Activated CD8-positive, alpha-beta T cell treated with anti-CD3 and anti-CD28 coated beads, Interleukin-2, amount 10 ng/mL, durations not matched to agents 7 days and 5 days (primary cell): ENCODE measurements at regions of chr1 and their contacts with region 1.

Region 1: GRCh38 chr1:229479660-229480399 is 28.3 kb downstream of the NUP133 start:
- DNase-seq: no peak
- ATAC-seq: no peak
- H3K4me3 Mint-ChIP-seq: no peak overlapping the region
- H3K27ac Mint-ChIP-seq: peak overlapping the region; percentile 4
- H3K4me1 Mint-ChIP-seq: peaks cover 9% of the 10 kb centered on the region
- H3K27me3 Mint-ChIP-seq: no peaks in the 10 kb centered on the region

Region 2: GRCh38 chr1:229410692-229411443 is 69.0 kb before region 1 on chr1:
- CTCF ChIA-PET with region 1: interaction called, 10 read pairs
- POLR2A ChIA-PET with region 1: no interaction called
- DNase-seq: peak; percentile 42
- ATAC-seq: peak; percentile 65
- H3K4me3 Mint-ChIP-seq: peak overlapping the region; percentile 47
- H3K27ac Mint-ChIP-seq: peak overlapping the region; percentile 62
- H3K4me1 Mint-ChIP-seq: peaks cover 29% of the 10 kb centered on the region
- H3K27me3 Mint-ChIP-seq: peaks cover 54% of the 10 kb centered on the region

Region 3: GRCh38 chr1:229440851-229441537 is 38.8 kb before region 1 on chr1:
- CTCF ChIA-PET with region 1: interaction called, 16 read pairs
- POLR2A ChIA-PET with region 1: no interaction called
- DNase-seq: peak; percentile 56
- ATAC-seq: peak; percentile 94
- H3K4me3 Mint-ChIP-seq: peak overlapping the region; percentile 10
- H3K27ac Mint-ChIP-seq: peak overlapping the region; percentile 73
- H3K4me1 Mint-ChIP-seq: peaks cover 30% of the 10 kb centered on the region
- H3K27me3 Mint-ChIP-seq: peaks cover 9% of the 10 kb centered on the region

Region 4: DNA sequence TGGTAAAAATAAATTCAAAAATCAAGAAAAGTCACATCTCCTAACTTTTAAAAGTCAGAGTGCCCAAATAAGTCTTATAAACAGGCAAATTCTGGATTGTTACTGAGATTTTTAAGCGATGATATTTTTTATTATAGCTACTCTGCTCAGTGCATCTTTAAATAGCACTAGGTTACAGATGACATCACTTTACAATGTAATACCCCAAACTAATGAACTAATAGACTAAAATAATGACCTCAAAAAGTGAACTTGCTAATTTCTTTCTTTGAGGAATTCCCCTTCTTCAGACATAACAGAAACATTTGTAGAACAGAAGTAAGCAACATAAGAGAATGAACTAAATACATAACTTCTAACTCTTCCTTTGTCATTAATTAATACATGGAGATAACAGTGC is 12.9 kb before region 1 on chr1:
- CTCF ChIA-PET with region 1: interaction called, 16 read pairs
- POLR2A ChIA-PET with region 1: no interaction called
- DNase-seq: no peak
- ATAC-seq: no peak
- H3K4me3 Mint-ChIP-seq: no peak overlapping the region
- H3K27ac Mint-ChIP-seq: no peak overlapping the region
- H3K4me1 Mint-ChIP-seq: no peaks in the 10 kb centered on the region
- H3K27me3 Mint-ChIP-seq: no peaks in the 10 kb centered on the region

Region 5: GRCh38 chr1:229495782-229496181 is 16.0 kb after region 1 on chr1:
- CTCF ChIA-PET with region 1: interaction called, 11 read pairs
- POLR2A ChIA-PET with region 1: interaction called, 3 read pairs
- DNase-seq: no peak
- ATAC-seq: no peak
- H3K4me3 Mint-ChIP-seq: no peak overlapping the region
- H3K27ac Mint-ChIP-seq: no peak overlapping the region
- H3K4me1 Mint-ChIP-seq: no peaks in the 10 kb centered on the region
- H3K27me3 Mint-ChIP-seq: no peaks in the 10 kb centered on the region

Region 6: GRCh38 chr1:229507951-229508822 is 28.4 kb after region 1 on chr1 and contains the start of gene NUP133:
- CTCF ChIA-PET with region 1: interaction called, 11 read pairs
- POLR2A ChIA-PET with region 1: interaction called, 6 read pairs
- DNase-seq: peak; percentile 99
- ATAC-seq: peak; percentile 95
- H3K4me3 Mint-ChIP-seq: peak within 1 kb of the TSS; percentile 87
- H3K27ac Mint-ChIP-seq: peak within 1 kb of the TSS; percentile 96
- H3K4me1 Mint-ChIP-seq: peaks cover 36% of the 10 kb centered on the region
- H3K27me3 Mint-ChIP-seq: peaks cover 2% of the 10 kb centered on the region
- total RNA-seq, gene NUP133: 46.8 to 49.7 TPM

Region 7: DNA sequence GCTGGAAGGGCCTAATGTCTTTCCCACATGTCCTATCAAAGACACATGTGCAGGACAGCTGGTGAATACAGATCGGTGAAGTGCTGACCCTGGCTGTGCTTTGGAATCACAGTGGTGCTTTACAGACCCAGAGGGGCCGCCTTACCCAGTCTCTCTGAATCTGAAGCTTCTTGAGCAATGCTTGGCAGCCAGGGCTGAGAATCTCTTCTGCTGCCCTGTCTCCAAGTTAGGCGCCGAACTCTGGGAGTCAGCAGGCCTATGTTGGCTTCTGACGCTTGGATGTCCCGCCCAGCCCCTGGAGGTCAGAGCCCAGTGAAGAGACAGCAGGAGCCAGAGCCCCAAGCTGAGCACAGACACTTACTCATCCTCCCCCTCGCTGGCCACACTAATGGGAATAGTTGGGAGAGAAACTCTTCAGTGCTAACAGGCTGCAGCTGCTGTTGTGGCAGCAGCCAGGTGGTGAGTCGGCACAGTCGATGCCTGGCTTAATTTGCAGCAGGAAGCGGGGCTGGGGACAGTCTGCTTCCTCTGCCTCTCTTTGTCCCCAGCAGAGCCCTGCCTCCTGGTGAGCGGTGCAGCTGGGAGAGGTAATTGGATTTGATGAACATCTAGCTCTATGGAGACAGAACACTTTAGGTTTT is 214.3 kb after region 1 on chr1:
- CTCF ChIA-PET with region 1: no interaction called
- POLR2A ChIA-PET with region 1: no interaction called
- DNase-seq: no peak
- ATAC-seq: no peak
- H3K4me3 Mint-ChIP-seq: no peak overlapping the region
- H3K27ac Mint-ChIP-seq: no peak overlapping the region
- H3K4me1 Mint-ChIP-seq: peaks cover 24% of the 10 kb centered on the region
- H3K27me3 Mint-ChIP-seq: peaks cover 14% of the 10 kb centered on the region

Region 8: GRCh38 chr1:229714964-229715603 is 235.3 kb after region 1 on chr1:
- CTCF ChIA-PET with region 1: no interaction called
- POLR2A ChIA-PET with region 1: no interaction called
- DNase-seq: peak; percentile 40
- ATAC-seq: no peak
- H3K4me3 Mint-ChIP-seq: no peak overlapping the region
- H3K27ac Mint-ChIP-seq: no peak overlapping the region
- H3K4me1 Mint-ChIP-seq: no peaks in the 10 kb centered on the region
- H3K27me3 Mint-ChIP-seq: peaks cover 4% of the 10 kb centered on the region